Ascending aorta (tissue), 2 donors: ENCODE measurements at regions of chr3 and their contacts with region 1.

Region 1: DNA sequence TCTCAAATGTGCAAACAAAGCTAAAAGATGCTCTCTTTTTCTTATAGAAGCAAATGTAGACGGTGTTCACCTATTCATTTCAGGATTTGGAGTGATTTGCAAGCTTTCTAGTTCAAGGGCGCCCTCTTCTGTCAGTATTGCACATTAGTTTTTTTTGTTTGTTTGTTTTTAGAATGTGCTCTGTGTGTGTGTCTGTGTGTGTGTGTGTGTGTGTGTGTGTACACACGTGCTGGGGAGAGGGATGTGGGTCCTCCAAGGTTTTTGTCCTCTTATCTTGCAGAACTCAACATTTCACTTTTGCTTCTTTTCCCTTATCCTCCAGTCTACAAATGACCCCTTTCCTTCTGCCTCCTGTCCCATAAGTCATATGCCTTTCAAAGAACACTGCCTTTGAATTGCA is 23.5 kb downstream of the DNAH1 start:
- DNase-seq: no peak
- H3K4me3 ChIP-seq: no peak overlapping the region
- H3K27ac ChIP-seq: no peak overlapping the region
- H3K4me1 ChIP-seq: no peaks in the 10 kb centered on the region
- H3K27me3 ChIP-seq: no peaks in the 10 kb centered on the region
- CTCF ChIP-seq: peak; percentile 66 to 79 (median 68)

Region 2: GRCh38 chr3:52220380-52221026 is 119.1 kb before region 1 on chr3:
- intact Hi-C with region 1: loop called (anchors 1 kb)
- DNase-seq: peak in 1 of 2 donors; percentile 88
- H3K4me3 ChIP-seq: no peak overlapping the region
- H3K27ac ChIP-seq: no peak overlapping the region
- H3K4me1 ChIP-seq: peaks cover 0 to 16% of the 10 kb centered on the region in 2 donors
- H3K27me3 ChIP-seq: no peaks in the 10 kb centered on the region
- CTCF ChIP-seq: peak; percentile 80 to 94 (median 92)

Region 3: DNA sequence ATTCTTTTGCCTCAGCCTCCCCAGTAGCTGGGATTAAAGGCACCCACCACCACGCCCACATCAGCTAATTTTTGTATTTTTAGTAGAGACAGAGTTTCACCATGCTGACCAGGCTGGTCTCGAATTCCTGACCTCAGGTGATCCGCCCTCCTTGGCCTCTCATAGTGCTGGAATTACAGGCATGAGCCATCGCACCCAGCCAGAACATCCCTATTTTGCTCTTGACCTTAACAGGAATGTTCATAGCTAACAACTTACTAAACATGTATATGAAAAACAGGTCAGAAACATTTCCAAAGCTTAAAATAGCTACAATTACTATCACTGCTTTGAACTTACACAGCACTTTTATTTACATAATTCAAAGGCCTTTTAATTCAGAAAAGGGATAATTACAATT is 230.5 kb after region 1 on chr3:
- intact Hi-C with region 1: no loop called
- DNase-seq: no peak
- H3K4me3 ChIP-seq: no peak overlapping the region
- H3K27ac ChIP-seq: no peak overlapping the region
- H3K4me1 ChIP-seq: no peaks in the 10 kb centered on the region
- H3K27me3 ChIP-seq: no peaks in the 10 kb centered on the region
- CTCF ChIP-seq: no peak